Activated CD8-positive, alpha-beta memory T cell treated with anti-CD3 and anti-CD28 coated beads, Interleukin-2, amount 10 ng/mL, durations not matched to agents 7 days and 5 days (primary cell): ENCODE measurements at regions of chr7 and their contacts with region 1.

Region 1: GRCh38 chr7:141679014-141679413 is 23.0 kb downstream of the DENND11 start:
- DNase-seq: no peak
- ATAC-seq: peak; percentile 90
- H3K4me3 Mint-ChIP-seq: peak overlapping the region; percentile 4
- H3K27ac Mint-ChIP-seq: peak overlapping the region; percentile 47
- H3K4me1 Mint-ChIP-seq: peaks cover 47% of the 10 kb centered on the region
- H3K27me3 Mint-ChIP-seq: no peaks in the 10 kb centered on the region

Region 2: DNA sequence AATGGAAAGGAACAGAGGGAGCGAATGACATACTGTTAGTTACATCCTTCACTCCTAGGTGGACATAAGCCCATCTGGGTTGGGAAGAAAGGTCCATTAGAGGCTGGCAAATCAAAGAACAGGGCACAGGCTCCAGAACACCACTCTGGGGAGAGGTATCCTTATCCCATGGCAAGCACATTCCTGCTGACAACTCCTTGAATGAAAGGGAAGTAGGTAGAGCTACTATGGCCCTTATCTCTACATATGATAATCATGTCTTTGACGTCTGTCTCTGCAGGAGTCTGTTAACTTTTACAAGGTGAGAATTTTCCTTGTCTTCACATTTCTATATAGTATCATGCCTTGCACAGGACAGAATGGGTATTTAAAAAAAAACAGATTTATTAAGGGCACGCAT is 12.5 kb after region 1 on chr7:
- CTCF ChIA-PET with region 1: no interaction called
- DNase-seq: no peak
- ATAC-seq: no peak
- H3K4me3 Mint-ChIP-seq: no peak overlapping the region
- H3K27ac Mint-ChIP-seq: no peak overlapping the region
- H3K4me1 Mint-ChIP-seq: peaks cover 7% of the 10 kb centered on the region
- H3K27me3 Mint-ChIP-seq: no peaks in the 10 kb centered on the region

Region 3: DNA sequence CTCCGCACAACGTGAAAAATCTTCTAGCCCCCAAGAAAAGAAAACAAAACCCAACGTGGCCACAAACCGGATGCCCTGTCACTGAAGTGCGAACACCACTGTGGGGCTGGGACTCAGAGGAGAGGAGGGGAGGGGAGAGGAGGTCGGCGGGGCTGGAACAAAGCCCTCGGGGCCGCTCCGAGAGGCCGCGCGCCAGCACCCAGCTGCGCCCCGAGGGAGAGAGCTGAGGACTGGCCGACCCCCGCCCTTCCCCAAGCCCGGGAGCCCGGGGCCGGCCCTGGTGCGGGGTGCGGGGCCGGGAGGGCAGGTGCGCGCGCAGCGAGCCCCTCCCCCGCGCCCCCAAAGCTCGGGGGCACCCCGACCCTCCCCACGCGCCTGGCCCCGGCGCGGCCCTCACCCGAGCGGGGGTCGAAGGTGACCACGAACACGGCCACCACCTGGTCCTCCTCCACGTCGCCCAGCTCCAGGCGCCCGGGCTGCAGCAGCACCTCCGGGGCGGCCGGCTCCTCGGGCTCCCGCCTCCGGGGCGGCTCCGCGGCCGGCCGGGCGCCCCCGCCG is 22.6 kb after region 1 on chr7:
- CTCF ChIA-PET with region 1: interaction called, 10 read pairs
- DNase-seq: peak; percentile 87
- ATAC-seq: peak; percentile 88
- H3K4me3 Mint-ChIP-seq: peak overlapping the region; percentile 67
- H3K27ac Mint-ChIP-seq: peak overlapping the region; percentile 64
- H3K4me1 Mint-ChIP-seq: peaks cover 28% of the 10 kb centered on the region
- H3K27me3 Mint-ChIP-seq: peaks cover 40% of the 10 kb centered on the region